Psoas muscle (tissue), 8 donors: ENCODE measurements at regions of chr3 and their contacts with region 1.

Region 1: GRCh38 chr3:172750368-172751174 is at the start of gene ECT2:
- DNase-seq: peak; percentile 98 to 99
- ATAC-seq: peak; percentile 100
- H3K4me3 ChIP-seq: peak within 1 kb of the TSS; percentile 78
- H3K27ac ChIP-seq: peak within 1 kb of the TSS; percentile 66
- H3K4me1 ChIP-seq: peaks cover 5% of the 10 kb centered on the region
- H3K27me3 ChIP-seq: no peaks in the 10 kb centered on the region
- CTCF ChIP-seq: peak; percentile 74
- total RNA-seq, gene ECT2: 2.0 to 4.5 (median 2.5) TPM

Region 2: DNA sequence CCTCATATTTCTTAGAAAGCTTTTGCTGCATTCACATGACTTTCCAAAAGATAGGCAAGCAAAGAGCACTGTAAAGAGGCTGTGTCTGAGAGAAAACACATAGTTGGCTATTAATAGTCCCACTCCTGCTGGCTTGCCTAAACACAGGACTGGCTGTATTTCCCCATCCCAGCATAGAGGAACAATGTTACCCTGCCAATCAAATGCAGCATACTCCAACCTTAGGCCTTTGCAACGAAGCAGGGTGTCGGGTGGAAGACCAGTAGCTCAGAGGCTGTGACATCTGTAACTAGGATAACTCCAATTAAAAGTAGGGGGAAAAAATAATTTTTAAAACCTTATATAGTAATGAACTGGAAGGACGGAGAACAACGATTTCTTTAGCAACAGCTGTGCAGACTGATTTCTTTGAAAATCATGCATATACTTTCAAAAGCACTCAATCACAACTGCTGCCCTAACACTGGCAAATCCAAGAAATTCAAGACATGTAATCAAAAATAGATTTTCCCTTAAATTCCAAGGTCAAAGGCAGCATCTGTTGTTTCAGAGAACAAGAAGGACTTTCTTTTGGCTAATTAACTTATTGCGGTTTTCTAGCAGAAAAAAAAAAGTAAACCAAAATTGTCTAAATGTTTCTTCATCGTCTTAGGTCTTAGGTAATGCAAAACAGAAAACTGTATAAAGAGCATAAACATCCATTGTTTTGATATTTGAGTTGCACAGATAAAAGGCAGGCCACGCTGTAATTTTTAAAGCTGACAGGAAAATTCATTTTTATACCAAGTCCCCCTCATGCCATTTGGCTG is 1429.6 kb before region 1 on chr3:
- intact Hi-C with region 1: no loop called
- DNase-seq: peak in 1 of 2 donors; percentile 57
- ATAC-seq: peak; percentile 91 to 95 (median 92)
- H3K4me3 ChIP-seq: no peak overlapping the region
- H3K27ac ChIP-seq: peak overlapping the region; percentile 90
- H3K4me1 ChIP-seq: peaks cover 57% of the 10 kb centered on the region
- H3K27me3 ChIP-seq: no peaks in the 10 kb centered on the region
- CTCF ChIP-seq: no peak

Region 3: GRCh38 chr3:172673210-172673679 is 77.3 kb before region 1 on chr3:
- intact Hi-C with region 1: loop called in 1 of 2 experiments (anchors 10 kb)
- DNase-seq: peak; percentile 62 to 74
- ATAC-seq: peak; percentile 70 to 93 (median 82)
- H3K4me3 ChIP-seq: no peak overlapping the region
- H3K27ac ChIP-seq: no peak overlapping the region
- H3K4me1 ChIP-seq: peaks cover 17% of the 10 kb centered on the region
- H3K27me3 ChIP-seq: no peaks in the 10 kb centered on the region
- CTCF ChIP-seq: peak; percentile 63

Region 4: DNA sequence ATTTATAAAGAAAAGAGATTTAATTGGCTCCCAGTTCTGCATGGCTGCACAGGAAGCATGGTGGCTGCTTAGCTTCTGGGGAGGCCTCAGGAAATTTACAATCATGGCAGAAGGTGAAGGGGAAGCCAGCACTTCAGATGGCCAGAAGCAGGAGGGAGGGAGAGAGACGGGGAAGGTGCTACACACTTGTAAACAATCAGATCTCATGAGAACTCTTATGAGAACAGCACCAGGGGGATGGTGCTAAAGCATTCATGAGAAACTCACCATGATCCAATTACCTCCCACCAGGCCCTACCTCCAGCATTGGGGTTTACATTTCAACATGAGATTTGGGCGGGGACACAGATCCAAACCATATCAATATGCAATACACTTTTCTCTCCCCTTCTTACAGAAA is 73.7 kb after region 1 on chr3:
- intact Hi-C with region 1: no loop called
- DNase-seq: no peak
- ATAC-seq: no peak
- H3K4me3 ChIP-seq: no peak overlapping the region
- H3K27ac ChIP-seq: no peak overlapping the region
- H3K4me1 ChIP-seq: no peaks in the 10 kb centered on the region
- H3K27me3 ChIP-seq: no peaks in the 10 kb centered on the region
- CTCF ChIP-seq: no peak